Ascending aorta (tissue), 2 donors: ENCODE measurements at regions of chr3 and their contacts with region 1.

Region 1: DNA sequence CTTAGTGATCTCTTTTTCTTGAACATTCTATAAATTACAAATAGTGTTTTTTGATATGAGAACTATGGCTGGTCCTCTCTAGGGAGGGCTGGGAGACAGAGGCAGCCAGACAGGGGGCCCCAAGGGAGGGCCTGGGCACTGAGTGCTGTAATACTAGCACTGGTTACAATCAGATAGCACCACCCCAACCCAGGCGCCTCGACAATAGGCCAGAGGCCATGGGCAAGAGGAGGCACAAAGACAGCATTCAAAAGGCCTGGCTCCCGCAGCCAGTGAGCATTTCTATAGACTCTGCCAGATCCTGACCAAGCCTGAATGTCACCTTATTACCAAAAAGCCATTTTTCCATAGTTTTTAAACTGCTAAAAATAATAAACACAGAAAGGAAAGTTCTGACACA is 158.5 kb downstream of the THRB start:
- DNase-seq: no peak
- H3K4me3 ChIP-seq: no peak overlapping the region
- H3K27ac ChIP-seq: peak overlapping the region; percentile 24 to 56
- H3K4me1 ChIP-seq: peaks cover 0 to 35% of the 10 kb centered on the region in 2 donors
- H3K27me3 ChIP-seq: no peaks in the 10 kb centered on the region
- CTCF ChIP-seq: no peak

Region 2: GRCh38 chr3:24290596-24290995 is 45.5 kb before region 1 on chr3:
- intact Hi-C with region 1: loop called (anchors 5 kb)
- DNase-seq: no peak
- H3K4me3 ChIP-seq: no peak overlapping the region
- H3K27ac ChIP-seq: peak overlapping the region; percentile 66 to 67
- H3K4me1 ChIP-seq: peaks cover 2 to 44% of the 10 kb centered on the region in 2 donors
- H3K27me3 ChIP-seq: no peaks in the 10 kb centered on the region
- CTCF ChIP-seq: no peak

Region 3: GRCh38 chr3:24365194-24365612 is 29.1 kb after region 1 on chr3:
- intact Hi-C with region 1: no loop called
- DNase-seq: peak; percentile 41 to 91
- H3K4me3 ChIP-seq: no peak overlapping the region
- H3K27ac ChIP-seq: peak overlapping the region; percentile 62 to 70
- H3K4me1 ChIP-seq: peaks cover 7 to 63% of the 10 kb centered on the region in 2 donors
- H3K27me3 ChIP-seq: no peaks in the 10 kb centered on the region
- CTCF ChIP-seq: peak in 2 of 3 experiments; percentile 16 to 36

Region 4: GRCh38 chr3:25103391-25103790 is 767.3 kb after region 1 on chr3:
- intact Hi-C with region 1: no loop called
- DNase-seq: no peak
- H3K4me3 ChIP-seq: no peak overlapping the region
- H3K27ac ChIP-seq: no peak overlapping the region
- H3K4me1 ChIP-seq: no peaks in the 10 kb centered on the region
- H3K27me3 ChIP-seq: no peaks in the 10 kb centered on the region
- CTCF ChIP-seq: no peak